CD4-positive, alpha-beta memory T cell (primary cell): ENCODE measurements at regions of chr3 and their contacts with region 1.

Region 1: DNA sequence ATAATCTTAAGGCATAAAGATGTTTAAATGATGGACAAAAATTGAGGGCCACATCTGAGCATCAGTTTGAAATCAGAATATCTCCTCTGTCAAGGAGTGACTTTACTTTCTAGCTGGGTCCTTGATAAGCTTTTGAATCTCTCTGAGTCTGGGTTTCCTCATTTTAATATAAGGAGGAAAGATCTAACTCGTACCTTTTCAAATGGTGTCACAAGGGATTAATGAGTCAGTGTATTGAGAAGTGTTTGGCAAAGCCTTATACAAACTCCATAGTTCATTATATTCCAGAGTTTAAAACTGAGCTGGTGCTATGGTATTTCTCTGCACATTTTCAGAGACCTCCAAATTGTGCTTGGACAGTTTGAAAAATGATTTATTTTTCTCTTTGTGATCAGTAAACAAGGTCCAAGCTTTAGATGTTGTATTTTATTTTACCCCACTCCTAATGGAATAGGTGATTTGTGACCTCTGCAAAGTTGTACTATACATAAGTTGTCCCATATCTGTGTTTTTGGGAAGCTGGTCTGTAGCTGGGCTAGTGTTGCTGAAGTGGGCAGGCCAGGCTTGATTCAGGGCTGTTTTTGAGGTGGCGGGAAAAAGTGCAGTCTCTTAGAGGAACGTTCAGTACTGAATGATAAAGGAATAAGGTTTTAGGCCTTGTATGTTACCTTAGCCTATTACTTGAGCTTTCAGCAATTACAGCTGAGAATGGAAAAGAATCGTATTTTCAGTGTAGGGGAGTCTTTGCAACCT is 5.6 kb downstream of the FNDC3B start:
- DNase-seq: no peak
- H3K4me3 ChIP-seq: no peak overlapping the region
- H3K4me3 Mint-ChIP-seq: peak overlapping the region in 1 of 8 donors; percentile 59
- H3K27ac ChIP-seq: no peak overlapping the region
- H3K27ac Mint-ChIP-seq: peak overlapping the region in 3 of 7 donors; percentile 1 to 78 (median 57)
- H3K4me1 ChIP-seq: peaks cover 26% of the 10 kb centered on the region
- H3K4me1 Mint-ChIP-seq: peaks cover 21 to 61% (median 39%) of the 10 kb centered on the region in 4 donors
- H3K27me3 ChIP-seq: no peaks in the 10 kb centered on the region
- H3K27me3 Mint-ChIP-seq: no peaks in the 10 kb centered on the region

Region 2: DNA sequence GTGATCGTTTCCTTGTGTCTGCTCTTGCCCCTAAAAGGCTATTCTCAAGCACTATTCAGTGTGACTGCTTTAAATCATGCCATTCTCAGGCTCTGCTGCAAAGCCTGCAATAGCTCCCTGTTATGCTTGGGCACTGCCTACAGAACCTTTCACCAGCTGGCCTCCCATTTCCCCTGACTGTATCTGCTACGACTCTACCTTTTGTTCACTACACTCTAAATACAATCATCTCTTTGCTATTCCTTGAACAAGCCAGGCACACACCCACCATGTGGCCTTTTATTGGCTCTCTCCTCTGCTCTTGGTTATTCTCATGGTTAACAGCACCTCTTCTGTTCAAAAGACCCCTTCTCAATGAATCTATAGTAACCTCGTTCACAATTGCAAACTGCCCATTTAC is 35.2 kb before region 1 on chr3:
- CTCF ChIA-PET with region 1: no interaction called
- POLR2A ChIA-PET with region 1: no interaction called
- intact Hi-C with region 1: no loop called
- DNase-seq: no peak
- H3K4me3 ChIP-seq: no peak overlapping the region
- H3K4me3 Mint-ChIP-seq: no peak overlapping the region
- H3K27ac ChIP-seq: no peak overlapping the region
- H3K27ac Mint-ChIP-seq: no peak overlapping the region
- H3K4me1 ChIP-seq: no peaks in the 10 kb centered on the region
- H3K4me1 Mint-ChIP-seq: no peaks in the 10 kb centered on the region
- H3K27me3 ChIP-seq: no peaks in the 10 kb centered on the region
- H3K27me3 Mint-ChIP-seq: peaks cover 0 to 4% of the 10 kb centered on the region in 2 donors

Region 3: DNA sequence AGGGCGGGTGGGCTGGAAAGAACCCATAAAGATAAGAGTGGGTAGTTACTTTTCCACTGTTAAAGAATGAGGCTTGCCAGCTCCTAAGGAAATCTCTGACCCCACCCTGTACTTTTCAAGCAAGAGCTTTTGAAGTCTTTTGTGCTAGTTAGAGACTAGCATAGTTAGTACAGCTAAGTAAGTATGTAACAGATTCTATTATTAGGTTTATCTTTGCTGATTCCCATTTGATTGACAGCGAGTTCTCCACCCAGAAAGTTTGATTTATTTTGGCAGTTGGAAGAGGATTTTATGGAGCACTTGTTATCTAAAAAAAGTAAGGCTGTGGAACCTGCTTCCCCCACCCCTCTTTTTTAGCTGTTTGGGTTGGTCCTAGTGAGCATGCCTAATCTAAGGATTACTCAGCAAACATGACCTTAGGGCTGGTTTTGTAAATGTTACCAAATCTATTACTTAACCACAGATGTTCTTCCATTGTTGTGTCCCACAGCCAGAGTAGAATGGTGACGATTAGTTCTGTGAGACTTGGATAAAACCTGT is 51.9 kb after region 1 on chr3:
- CTCF ChIA-PET with region 1: interaction called, 3 read pairs
- POLR2A ChIA-PET with region 1: interaction called, 7 read pairs
- intact Hi-C with region 1: loop called (anchors 1 kb)
- DNase-seq: no peak
- H3K4me3 ChIP-seq: no peak overlapping the region
- H3K4me3 Mint-ChIP-seq: peak overlapping the region in 1 of 8 donors; percentile 31
- H3K27ac ChIP-seq: no peak overlapping the region
- H3K27ac Mint-ChIP-seq: no peak overlapping the region
- H3K4me1 ChIP-seq: peaks cover 38% of the 10 kb centered on the region
- H3K4me1 Mint-ChIP-seq: peaks cover 28 to 59% (median 47%) of the 10 kb centered on the region in 4 donors
- H3K27me3 ChIP-seq: no peaks in the 10 kb centered on the region
- H3K27me3 Mint-ChIP-seq: no peaks in the 10 kb centered on the region